BJ (cell line): ENCODE measurements at regions of chr4 and their contacts with region 1.

Region 1: GRCh38 chr4:77344784-77345183 is 187.8 kb downstream of the CCNG2 start:
- DNase-seq: no peak
- H3K4me3 ChIP-seq: no peak overlapping the region
- H3K27me3 ChIP-seq: no peaks in the 10 kb centered on the region
- CTCF ChIP-seq: no peak

Region 2: DNA sequence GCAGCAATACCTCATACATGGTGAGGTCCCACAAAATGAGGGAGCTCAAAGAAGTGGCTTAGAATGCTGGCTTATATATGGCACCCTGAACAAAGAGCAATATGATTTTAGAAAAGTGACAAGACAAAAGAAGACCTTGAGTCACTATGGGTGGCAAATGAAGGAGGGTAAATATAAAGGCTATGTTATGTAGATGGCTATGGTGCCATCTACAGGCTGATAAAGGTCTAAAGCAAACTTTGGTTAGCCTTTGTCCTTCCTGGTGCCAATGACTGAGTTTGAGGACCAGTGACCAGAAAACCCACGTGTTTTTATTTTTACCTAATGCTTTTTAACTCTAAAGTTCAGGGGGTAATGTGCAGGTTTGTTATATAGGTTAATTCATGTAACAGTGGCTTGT is 35.9 kb before region 1 on chr4:
- CTCF ChIA-PET with region 1: no interaction called
- POLR2A ChIA-PET with region 1: no interaction called
- DNase-seq: no peak
- H3K4me3 ChIP-seq: no peak overlapping the region
- H3K27me3 ChIP-seq: peaks cover 2% of the 10 kb centered on the region; the same call in 1 of the 2 replicates
- CTCF ChIP-seq: peak; percentile 50

Region 3: GRCh38 chr4:77358315-77358928 is 13.6 kb after region 1 on chr4:
- CTCF ChIA-PET with region 1: interaction called, 13 read pairs
- POLR2A ChIA-PET with region 1: no interaction called
- DNase-seq: no peak
- H3K4me3 ChIP-seq: no peak overlapping the region
- H3K27me3 ChIP-seq: peaks cover 4% of the 10 kb centered on the region
- CTCF ChIP-seq: peak; percentile 69